ENCODE measurements at regions of chr5 and their contacts with region 1.

Region 1: DNA sequence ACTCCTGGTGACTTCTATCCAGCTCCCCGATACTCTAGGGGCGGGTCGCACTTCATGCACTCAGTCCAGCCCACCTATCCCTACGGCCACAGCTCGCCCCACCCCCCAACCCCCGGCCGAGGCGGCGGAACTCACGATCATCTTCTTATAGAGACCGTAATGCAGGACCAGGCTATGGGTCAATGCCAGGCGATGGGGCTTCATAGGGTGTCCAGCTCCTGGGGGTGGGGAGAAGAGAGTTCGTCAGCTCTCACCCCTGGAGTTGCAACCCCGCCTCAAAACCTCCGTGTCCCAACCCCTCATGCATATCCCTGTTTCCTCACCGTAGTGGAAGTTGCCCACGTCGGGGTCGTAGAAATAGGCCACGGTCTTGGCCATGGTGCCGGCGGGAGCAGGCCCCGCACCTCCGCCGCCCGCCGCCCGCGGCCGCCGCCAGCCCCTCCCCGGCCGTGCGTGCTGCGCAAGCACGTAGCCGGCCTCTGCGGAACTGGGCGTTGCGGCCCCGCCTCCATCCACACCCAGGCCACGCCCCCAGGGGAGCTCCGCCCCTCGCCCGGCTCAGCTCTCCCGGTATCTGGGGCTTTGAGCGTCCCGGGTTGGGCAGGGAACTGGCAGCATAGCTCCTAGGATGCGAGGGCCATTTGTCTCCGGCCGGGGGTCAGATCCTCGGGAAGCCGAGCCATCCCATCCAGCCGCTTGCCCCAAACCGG is at the starts of genes HDAC3 and RELL2:
- DNase-seq: peak; percentile 99
- ATAC-seq: peak; percentile 84
- H3K4me3 Mint-ChIP-seq: peak within 1 kb of the TSS; percentile 89
- H3K27ac Mint-ChIP-seq: peak within 1 kb of the TSS; percentile 73
- H3K4me1 Mint-ChIP-seq: peaks cover 39% of the 10 kb centered on the region
- H3K27me3 Mint-ChIP-seq: no peaks in the 10 kb centered on the region
- CTCF ChIP-seq: no peak
- total RNA-seq, gene HDAC3: 101 and 102 TPM in 2 replicates
- total RNA-seq, gene RELL2: 16.8 and 18.9 TPM in 2 replicates

Region 2: GRCh38 chr5:141598391-141599350 is 37.9 kb before region 1 on chr5:
- CTCF ChIA-PET with region 1: interaction called, 87 read pairs
- POLR2A ChIA-PET with region 1: interaction called, 3 read pairs
- intact Hi-C with region 1: no loop called
- DNase-seq: no peak
- ATAC-seq: no peak
- H3K4me3 Mint-ChIP-seq: no peak overlapping the region
- H3K27ac Mint-ChIP-seq: peak overlapping the region; percentile 66
- H3K4me1 Mint-ChIP-seq: peaks cover 64% of the 10 kb centered on the region
- H3K27me3 Mint-ChIP-seq: no peaks in the 10 kb centered on the region
- CTCF ChIP-seq: no peak

Region 3: GRCh38 chr5:141605523-141606277 is 30.9 kb before region 1 on chr5:
- CTCF ChIA-PET with region 1: no interaction called
- POLR2A ChIA-PET with region 1: interaction called, 3 read pairs
- intact Hi-C with region 1: loop called (anchors 1 kb)
- DNase-seq: no peak
- ATAC-seq: peak; percentile 97
- H3K4me3 Mint-ChIP-seq: peak overlapping the region; percentile 76
- H3K27ac Mint-ChIP-seq: peak overlapping the region; percentile 93
- H3K4me1 Mint-ChIP-seq: peaks cover 84% of the 10 kb centered on the region
- H3K27me3 Mint-ChIP-seq: no peaks in the 10 kb centered on the region
- CTCF ChIP-seq: no peak

Region 4: GRCh38 chr5:141650851-141651727 is 14.5 kb after region 1 on chr5 and contains the start of gene FCHSD1:
- CTCF ChIA-PET with region 1: interaction called, 11 read pairs
- POLR2A ChIA-PET with region 1: interaction called, 50 read pairs
- intact Hi-C with region 1: loop called (anchors 1 kb)
- DNase-seq: peak; percentile 83
- ATAC-seq: peak; percentile 99
- H3K4me3 Mint-ChIP-seq: peak within 1 kb of the TSS; percentile 98
- H3K27ac Mint-ChIP-seq: peak within 1 kb of the TSS; percentile 96
- H3K4me1 Mint-ChIP-seq: peaks cover 29% of the 10 kb centered on the region
- H3K27me3 Mint-ChIP-seq: peaks cover 3% of the 10 kb centered on the region
- CTCF ChIP-seq: no peak
- total RNA-seq, gene FCHSD1: 63.2 and 79.5 TPM in 2 replicates

Region 5: DNA sequence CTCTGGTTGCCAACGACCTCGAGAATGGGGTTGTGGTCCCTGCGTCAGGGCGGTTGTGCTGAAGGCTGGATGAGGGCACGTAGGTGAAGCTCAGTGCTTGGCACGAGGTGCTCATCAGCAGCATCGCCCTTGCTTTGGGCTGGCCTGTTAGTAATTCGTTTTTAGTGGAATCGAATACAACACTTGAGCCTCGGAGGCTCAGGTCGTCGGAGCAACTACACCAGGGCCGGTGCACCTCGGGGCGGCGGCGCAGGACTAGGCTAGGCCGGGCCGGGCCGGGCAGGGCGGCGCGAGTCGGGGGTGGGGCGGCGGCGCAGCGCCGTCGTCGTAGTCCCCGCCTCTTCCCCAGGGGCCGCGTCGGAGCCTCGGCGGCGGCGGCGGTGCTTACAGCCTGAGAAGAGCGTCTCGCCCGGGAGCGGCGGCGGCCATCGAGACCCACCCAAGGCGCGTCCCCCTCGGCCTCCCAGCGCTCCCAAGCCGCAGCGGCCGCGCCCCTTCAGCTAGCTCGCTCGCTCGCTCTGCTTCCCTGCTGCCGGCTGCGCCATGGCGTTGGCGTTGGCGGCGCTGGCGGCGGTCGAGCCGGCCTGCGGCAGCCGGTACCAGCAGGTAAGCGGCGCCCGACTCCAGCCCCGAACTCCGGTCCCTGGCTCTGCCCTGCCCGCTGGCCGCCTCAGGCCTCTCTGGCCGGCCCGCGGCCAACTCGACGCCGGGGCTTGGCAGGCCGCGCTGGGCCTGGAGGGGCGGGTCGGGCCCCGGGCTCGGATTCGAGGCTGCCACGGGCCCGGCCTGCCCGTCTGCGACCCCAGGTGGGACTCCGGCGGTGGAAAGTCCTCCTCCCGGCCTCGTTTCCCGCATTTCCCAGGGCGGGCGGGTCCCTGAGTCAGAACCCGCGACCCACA is 472.1 kb after region 1 on chr5 and contains the start of gene NDFIP1:
- CTCF ChIA-PET with region 1: no interaction called
- POLR2A ChIA-PET with region 1: interaction called, 4 read pairs
- intact Hi-C with region 1: loop called (anchors 5 kb)
- DNase-seq: peak; percentile 84
- ATAC-seq: peak; percentile 97
- H3K4me3 Mint-ChIP-seq: peak within 1 kb of the TSS; percentile 84
- H3K27ac Mint-ChIP-seq: peak within 1 kb of the TSS; percentile 83
- H3K4me1 Mint-ChIP-seq: peaks cover 31% of the 10 kb centered on the region
- H3K27me3 Mint-ChIP-seq: no peaks in the 10 kb centered on the region
- CTCF ChIP-seq: no peak
- total RNA-seq, gene NDFIP1: 19.7 and 24.2 TPM in 2 replicates

Measured in activated B cell treated with CpG ODN at 0.5 μM for 24 hours (primary cell).